Dorsolateral prefrontal cortex (tissue), 120 donors: ENCODE measurements at regions of chr3 and their contacts with region 1.

Region 1: DNA sequence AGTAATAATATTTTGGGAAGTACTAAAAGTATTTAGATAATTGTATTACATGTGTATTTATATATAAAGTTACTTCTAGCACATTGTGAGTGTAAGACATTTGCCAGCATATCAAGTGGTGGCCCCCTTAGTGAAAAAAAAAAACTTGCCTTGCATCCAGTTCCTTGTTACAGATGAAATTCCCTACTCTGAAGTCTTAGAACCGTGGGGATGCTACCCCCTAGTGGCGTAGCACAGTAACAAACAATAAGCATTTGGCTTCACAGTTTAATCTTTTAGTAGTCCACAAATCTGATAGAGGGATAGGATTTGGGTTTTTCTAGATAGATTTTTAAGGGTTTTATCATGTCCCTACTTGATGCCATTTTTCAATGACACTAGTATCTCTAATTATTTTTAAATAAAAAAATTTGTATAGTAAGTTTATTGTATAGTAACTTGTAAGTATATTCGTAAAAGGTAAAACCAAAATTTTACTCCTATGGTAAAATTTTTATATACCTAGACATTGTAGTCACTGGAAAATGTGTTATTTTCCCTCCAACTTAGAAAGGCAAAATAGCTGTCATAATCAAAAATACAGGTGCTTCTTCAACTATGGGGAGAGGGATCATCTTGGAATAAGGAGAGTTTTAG is 14.3 kb downstream of the SMC4 start:
- DNase-seq: peak in 5 of 10 donors; percentile 45 to 75 (median 61)
- H3K4me3 ChIP-seq: no peak overlapping the region
- H3K27ac ChIP-seq: peak overlapping the region in 11 of 59 donors; percentile 7 to 57 (median 35)
- H3K27me3 ChIP-seq: no peaks in the 10 kb centered on the region
- CTCF ChIP-seq: peak; percentile 79 to 99 (median 90)

Region 2: GRCh38 chr3:160027541-160028195 is 386.1 kb before region 1 on chr3:
- intact Hi-C with region 1: loop called in 1 of 2 experiments (anchors 5 kb)
- DNase-seq: no peak
- H3K4me3 ChIP-seq: no peak overlapping the region
- H3K27ac ChIP-seq: no peak overlapping the region
- H3K27me3 ChIP-seq: no peaks in the 10 kb centered on the region
- CTCF ChIP-seq: no peak

Region 3: GRCh38 chr3:160150525-160150924 is 263.2 kb before region 1 on chr3:
- intact Hi-C with region 1: loop called in 1 of 2 experiments (anchors 10 kb)
- DNase-seq: no peak
- H3K4me3 ChIP-seq: no peak overlapping the region
- H3K27ac ChIP-seq: no peak overlapping the region
- H3K27me3 ChIP-seq: no peaks in the 10 kb centered on the region
- CTCF ChIP-seq: no peak

Region 4: DNA sequence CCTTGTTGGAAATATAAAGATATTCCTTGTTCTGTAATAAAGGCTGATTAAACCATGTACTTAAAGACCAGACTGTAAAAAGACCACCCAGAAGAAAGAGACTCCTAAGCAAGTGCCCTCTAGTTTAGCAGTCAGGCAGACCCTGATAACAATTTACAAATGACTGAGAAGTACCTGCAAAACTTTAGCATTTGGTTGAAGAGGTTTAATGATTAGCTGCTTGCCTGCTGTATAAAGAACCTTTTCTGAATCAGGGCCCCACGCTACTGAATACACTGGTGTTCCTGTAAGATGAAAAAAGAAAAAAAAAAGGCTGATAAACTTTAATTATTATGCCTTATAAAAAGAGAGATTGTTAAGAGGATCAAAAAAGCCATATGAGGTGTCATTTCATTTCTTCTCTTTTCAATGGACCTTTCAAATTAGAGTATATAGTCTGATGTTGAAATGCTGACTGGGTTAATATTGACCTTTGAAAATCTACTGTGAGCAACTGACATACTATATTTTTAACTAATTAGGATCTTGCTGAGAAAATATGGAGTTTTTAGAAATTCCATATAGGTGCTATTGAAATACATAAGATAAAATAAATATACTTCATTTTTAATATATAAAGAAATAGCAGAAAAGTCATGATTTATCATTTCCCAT is 47.7 kb before region 1 on chr3:
- intact Hi-C with region 1: no loop called
- DNase-seq: no peak
- H3K4me3 ChIP-seq: no peak overlapping the region
- H3K27ac ChIP-seq: no peak overlapping the region
- H3K27me3 ChIP-seq: no peaks in the 10 kb centered on the region
- CTCF ChIP-seq: no peak

Region 5: DNA sequence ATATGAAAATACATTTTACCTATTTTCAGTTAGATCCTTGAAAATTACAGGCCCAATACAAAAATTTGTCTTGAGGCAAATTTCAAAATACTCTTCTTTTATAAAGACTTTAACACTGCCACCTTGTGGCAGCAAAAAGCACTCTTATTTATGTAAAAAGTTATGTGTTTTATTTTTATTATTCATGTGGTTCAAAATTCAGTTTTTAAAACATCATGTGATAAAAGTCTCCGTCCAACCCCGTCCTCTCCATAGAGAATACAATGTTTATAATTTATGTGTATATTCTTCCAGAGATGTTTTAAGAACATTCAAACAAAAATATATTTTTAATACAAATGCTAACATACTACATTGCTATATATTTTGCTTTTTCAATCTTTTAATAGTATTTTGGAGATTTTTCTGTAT is 72.7 kb after region 1 on chr3:
- intact Hi-C with region 1: loop called (anchors 5 to 10 kb)
- DNase-seq: no peak
- H3K4me3 ChIP-seq: peak overlapping the region in 32 of 59 donors; percentile 14 to 68 (median 48)
- H3K27ac ChIP-seq: peak overlapping the region in 29 of 59 donors; percentile 35 to 86 (median 73)
- H3K27me3 ChIP-seq: no peaks in the 10 kb centered on the region
- CTCF ChIP-seq: peak; percentile 55 to 92 (median 78)

Region 6: DNA sequence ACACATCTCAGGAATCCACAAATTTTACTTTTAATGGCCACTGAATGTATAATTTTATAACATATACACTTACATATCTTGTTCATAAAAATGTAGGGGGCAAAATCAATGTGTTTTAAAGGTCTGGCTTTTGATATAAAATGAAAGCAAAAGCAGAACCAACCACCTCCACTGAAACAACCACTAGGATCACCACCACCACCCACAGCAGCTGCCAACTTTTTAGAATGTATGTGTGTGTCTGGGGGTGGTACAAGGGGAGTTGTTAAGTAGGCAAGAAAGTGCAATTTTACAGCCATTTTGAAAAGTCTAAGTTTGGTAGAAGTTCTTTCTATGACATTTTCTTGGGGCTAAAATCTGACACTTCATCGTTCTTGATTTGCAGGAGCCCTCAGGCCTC is 1126.9 kb after region 1 on chr3:
- intact Hi-C with region 1: no loop called
- DNase-seq: no peak
- H3K4me3 ChIP-seq: no peak overlapping the region
- H3K27ac ChIP-seq: no peak overlapping the region
- H3K27me3 ChIP-seq: no peaks in the 10 kb centered on the region
- CTCF ChIP-seq: no peak